Naive thymus-derived CD8-positive, alpha-beta T cell (primary cell): ENCODE measurements at regions of chr6 and their contacts with region 1.

Region 1: DNA sequence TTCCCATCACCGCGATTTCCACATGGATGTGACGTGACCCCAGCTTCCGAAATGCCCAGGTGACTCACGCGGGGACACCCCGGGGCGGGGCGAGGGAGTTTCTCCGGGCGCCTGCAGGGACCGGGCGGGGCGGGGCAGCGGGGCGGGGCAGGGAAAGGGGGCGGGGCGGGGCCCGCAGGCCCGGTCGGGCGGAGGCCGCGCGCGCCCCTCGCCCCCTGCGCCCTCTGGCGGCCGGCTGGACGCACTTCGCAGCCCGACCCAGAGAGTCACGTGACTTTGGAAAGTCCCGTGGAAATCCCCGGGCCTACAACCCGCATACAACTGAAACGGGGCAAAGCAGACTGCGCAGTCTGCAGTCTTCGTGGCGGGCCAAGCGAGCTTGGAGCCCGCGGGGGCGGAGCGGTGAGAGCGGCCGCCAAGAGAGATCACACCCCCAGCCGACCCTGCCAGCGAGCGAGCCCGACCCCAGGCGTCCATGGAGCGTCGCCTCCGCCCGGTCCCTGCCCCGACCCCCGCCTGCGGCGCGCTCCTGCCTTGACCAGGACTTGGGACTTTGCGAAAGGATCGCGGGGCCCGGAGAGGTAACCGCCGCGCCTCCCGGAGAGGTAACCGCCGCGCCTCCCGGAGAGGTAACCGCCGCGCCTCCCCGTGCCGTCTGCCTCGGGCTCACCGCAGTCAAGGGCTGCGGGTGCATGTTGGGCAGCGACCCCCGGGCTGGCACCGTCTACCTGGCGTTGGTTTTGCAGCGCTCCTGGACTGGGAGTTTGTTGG is at the start of gene TNFAIP3:
- DNase-seq: peak; percentile 93 to 100 (median 96)
- ATAC-seq: peak; percentile 71 to 74
- H3K4me3 Mint-ChIP-seq: peak within 1 kb of the TSS; percentile 92 to 99 (median 96)
- H3K27ac Mint-ChIP-seq: peak within 1 kb of the TSS; percentile 96 to 99 (median 99)
- H3K4me1 Mint-ChIP-seq: peaks cover 38 to 66% (median 60%) of the 10 kb centered on the region in 4 donors
- H3K27me3 Mint-ChIP-seq: no peaks in the 10 kb centered on the region
- polyA plus RNA-seq, gene TNFAIP3: 61.5 to 139 (median 84.3) TPM

Region 2: DNA sequence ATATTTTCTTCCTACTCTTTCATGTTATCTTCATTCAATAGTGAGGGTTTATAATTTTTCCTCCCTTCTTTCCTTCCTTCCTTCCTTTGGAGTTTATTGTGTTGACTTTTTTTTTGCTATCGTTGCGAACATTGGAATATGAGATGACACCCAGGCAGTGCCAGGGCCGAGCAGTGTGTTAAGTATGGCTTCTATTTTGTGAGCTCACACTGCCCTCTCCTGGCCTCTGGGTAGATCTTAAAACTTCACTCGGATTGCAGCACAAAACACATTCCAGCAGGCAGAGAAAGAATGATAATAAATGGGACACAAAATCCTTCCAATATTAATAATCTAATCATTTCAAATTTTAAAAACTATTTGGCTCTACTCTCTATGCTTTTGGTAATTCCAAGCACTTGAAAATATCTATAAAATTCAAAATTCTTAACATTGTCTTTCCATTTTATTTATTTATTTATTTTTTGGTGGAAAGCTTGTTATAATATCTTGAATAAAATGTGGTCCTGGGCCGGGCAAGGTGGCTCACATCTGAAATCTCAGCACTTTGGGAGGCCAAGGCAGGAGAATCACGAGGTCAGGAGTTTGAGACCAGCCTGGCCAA is 225.5 kb before region 1 on chr6:
- POLR2A ChIA-PET with region 1: no interaction called
- DNase-seq: peak; percentile 28 to 80 (median 60)
- ATAC-seq: peak; percentile 84 to 89
- H3K4me3 Mint-ChIP-seq: no peak overlapping the region
- H3K27ac Mint-ChIP-seq: no peak overlapping the region
- H3K4me1 Mint-ChIP-seq: peaks cover 4 to 10% (median 7%) of the 10 kb centered on the region in 4 donors
- H3K27me3 Mint-ChIP-seq: peaks cover 0 to 4% (median 3%) of the 10 kb centered on the region in 5 donors

Region 3: GRCh38 chr6:137707590-137708360 is 159.3 kb before region 1 on chr6:
- POLR2A ChIA-PET with region 1: interaction called, 25 read pairs
- DNase-seq: peak; percentile 55 to 94 (median 89)
- ATAC-seq: peak; percentile 73 to 77
- H3K4me3 Mint-ChIP-seq: peak overlapping the region; percentile 57 to 88 (median 75)
- H3K27ac Mint-ChIP-seq: peak overlapping the region; percentile 92 to 99 (median 97)
- H3K4me1 Mint-ChIP-seq: peaks cover 15 to 64% (median 43%) of the 10 kb centered on the region in 4 donors
- H3K27me3 Mint-ChIP-seq: no peaks in the 10 kb centered on the region

Region 4: GRCh38 chr6:137799950-137800568 is 67.0 kb before region 1 on chr6:
- POLR2A ChIA-PET with region 1: interaction called, 77 read pairs
- DNase-seq: peak; percentile 15 to 90 (median 76)
- ATAC-seq: peak; percentile 75 to 88
- H3K4me3 Mint-ChIP-seq: peak overlapping the region in 3 of 10 donors; percentile 27 to 59 (median 52)
- H3K27ac Mint-ChIP-seq: peak overlapping the region; percentile 80 to 96 (median 92)
- H3K4me1 Mint-ChIP-seq: peaks cover 28 to 61% (median 58%) of the 10 kb centered on the region in 4 donors
- H3K27me3 Mint-ChIP-seq: no peaks in the 10 kb centered on the region

Region 5: DNA sequence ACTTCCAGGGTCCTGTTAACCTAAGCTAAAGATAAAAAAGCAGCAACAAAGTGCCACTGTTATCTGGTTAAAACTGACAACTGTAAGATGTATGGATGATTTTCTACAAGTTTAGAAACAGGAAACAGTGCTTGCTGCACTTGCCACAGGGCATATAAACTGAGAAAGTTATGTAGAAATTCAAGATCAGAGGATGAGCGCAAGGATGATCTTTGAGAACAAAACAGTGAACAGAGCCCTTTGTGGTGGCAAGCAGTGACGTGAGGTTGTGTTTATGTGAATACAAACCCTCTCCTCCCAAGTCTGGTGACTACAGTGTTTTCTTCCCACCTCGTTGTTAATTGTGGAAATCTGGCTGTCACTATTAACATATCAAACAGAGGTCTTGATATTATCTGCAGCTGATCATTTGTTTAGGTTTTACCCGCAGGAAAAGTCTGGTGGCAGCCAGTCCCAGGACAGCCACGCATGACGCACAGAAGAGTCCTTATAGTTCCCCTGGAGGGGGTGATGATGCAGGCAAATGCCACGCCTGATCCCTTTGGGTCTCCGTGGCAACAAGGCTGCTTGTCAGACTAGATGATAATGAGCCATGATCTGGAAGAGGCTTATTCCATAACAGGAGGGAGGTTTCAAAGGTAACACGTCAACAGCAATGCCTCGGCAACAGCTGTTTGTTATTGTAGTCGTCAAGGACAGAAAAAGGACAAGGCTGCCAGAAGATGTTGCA is 43.1 kb before region 1 on chr6:
- POLR2A ChIA-PET with region 1: interaction called, 55 read pairs
- DNase-seq: peak in 9 of 10 donors; percentile 63 to 99 (median 95)
- ATAC-seq: peak; percentile 71 to 73
- H3K4me3 Mint-ChIP-seq: peak overlapping the region; percentile 67 to 85 (median 77)
- H3K27ac Mint-ChIP-seq: peak overlapping the region; percentile 98 to 100 (median 99)
- H3K4me1 Mint-ChIP-seq: peaks cover 29 to 87% (median 76%) of the 10 kb centered on the region in 4 donors
- H3K27me3 Mint-ChIP-seq: no peaks in the 10 kb centered on the region

Region 6: DNA sequence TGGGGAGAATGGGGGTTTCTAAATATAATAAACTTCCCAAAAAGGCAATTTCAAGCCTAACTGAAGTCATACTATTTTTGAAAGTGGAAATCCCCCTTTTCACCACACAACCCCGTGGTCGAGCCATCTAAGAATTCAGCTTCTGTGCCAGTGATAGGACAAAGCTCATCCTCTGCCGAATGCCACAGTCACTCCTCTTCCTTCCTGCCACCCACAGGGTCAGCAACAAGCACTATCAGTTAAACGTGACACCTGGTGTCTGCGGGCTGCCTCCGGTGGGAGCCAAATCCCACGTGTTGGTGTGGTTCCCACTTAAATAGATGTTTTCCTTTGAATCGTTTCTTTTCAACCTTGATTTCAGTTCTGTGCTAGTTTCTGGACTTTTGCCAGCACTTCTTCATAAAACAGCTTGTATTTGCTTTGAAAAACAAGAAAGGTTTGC is 60.7 kb after region 1 on chr6:
- POLR2A ChIA-PET with region 1: interaction called, 11 read pairs
- DNase-seq: peak; percentile 58 to 87 (median 80)
- ATAC-seq: peak; percentile 98 to 100
- H3K4me3 Mint-ChIP-seq: peak overlapping the region; percentile 38 to 81 (median 68)
- H3K27ac Mint-ChIP-seq: peak overlapping the region; percentile 59 to 97 (median 92)
- H3K4me1 Mint-ChIP-seq: peaks cover 17 to 52% (median 43%) of the 10 kb centered on the region in 4 donors
- H3K27me3 Mint-ChIP-seq: peaks cover 0 to 1% (median 0%) of the 10 kb centered on the region in 5 donors